GM12878 (cell line): ENCODE measurements at regions of chr1 and their contacts with region 1.

Region 1: GRCh38 chr1:165914136-165914798 is 86.9 kb downstream of the UCK2 start:
- DNase-seq: peak; percentile 54
- ATAC-seq: peak; percentile 95
- H3K4me3 ChIP-seq: no peak overlapping the region
- H3K27ac ChIP-seq: no peak overlapping the region
- H3K4me1 ChIP-seq: no peaks in the 10 kb centered on the region
- H3K27me3 ChIP-seq: no peaks in the 10 kb centered on the region
- CTCF ChIP-seq: peak; percentile 78 to 97 (median 87); a peak in 5 of 6 replicates
- EP300 ChIP-seq: no peak
- POLR2A ChIP-seq: no peak
- RAD21 ChIP-seq: peak; percentile 99

Region 2: GRCh38 chr1:165376041-165376810 is 538.0 kb before region 1 on chr1:
- CTCF ChIA-PET with region 1: no interaction called
- POLR2A ChIA-PET with region 1: no interaction called
- RAD21 ChIA-PET with region 1: no interaction called
- SMC1A ChIA-PET with region 1: no interaction called
- in situ Hi-C with region 1: no loop called
- intact Hi-C with region 1: loop called (anchors 5 kb)
- DNase-seq: no peak
- ATAC-seq: peak; percentile 67
- H3K4me3 ChIP-seq: peak overlapping the region; percentile 6; the same call in 1 of the 2 replicates
- H3K27ac ChIP-seq: no peak overlapping the region
- H3K4me1 ChIP-seq: peaks cover 4% of the 10 kb centered on the region; the same call in 1 of the 2 replicates
- H3K27me3 ChIP-seq: peaks cover 2% of the 10 kb centered on the region in 2 experiments; a peak in 3 of 4 replicates
- CTCF ChIP-seq: no peak
- EP300 ChIP-seq: no peak
- POLR2A ChIP-seq: no peak
- RAD21 ChIP-seq: no peak

Region 3: DNA sequence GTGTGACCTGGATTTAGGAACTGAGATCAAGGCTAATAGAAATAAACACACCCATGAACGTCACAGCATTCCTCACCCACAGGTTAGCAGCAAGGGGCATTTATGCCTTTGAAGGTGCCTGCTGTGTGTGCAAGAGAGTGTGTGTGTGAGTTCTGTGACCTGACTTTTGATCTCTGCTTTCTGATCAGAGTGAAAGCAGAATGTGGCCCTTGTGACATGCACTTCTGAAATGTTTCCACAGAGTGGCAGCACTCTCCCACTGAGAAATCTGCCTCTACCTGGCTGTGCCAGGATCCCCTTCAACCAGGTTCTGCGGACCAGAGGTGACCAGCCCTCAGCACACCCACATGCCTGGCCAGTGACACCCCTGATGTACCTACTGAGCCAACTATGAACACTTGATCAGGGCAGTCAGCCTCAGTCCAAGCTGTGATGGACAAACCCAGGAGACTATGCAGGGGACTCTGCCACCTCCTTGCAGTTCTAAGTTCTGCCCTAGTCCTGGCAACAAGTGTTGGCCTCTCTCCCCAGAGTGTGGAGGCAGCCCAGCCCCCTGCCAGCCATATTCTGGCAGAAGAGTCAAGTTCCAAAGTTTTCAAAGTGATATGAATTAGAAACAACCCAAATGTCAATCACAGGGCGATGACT is 510.3 kb before region 1 on chr1:
- CTCF ChIA-PET with region 1: no interaction called
- POLR2A ChIA-PET with region 1: no interaction called
- RAD21 ChIA-PET with region 1: no interaction called
- SMC1A ChIA-PET with region 1: interaction called, 4 read pairs
- in situ Hi-C with region 1: no loop called
- intact Hi-C with region 1: loop called (anchors 5 kb)
- DNase-seq: no peak
- ATAC-seq: peak; percentile 90
- H3K4me3 ChIP-seq: no peak overlapping the region
- H3K27ac ChIP-seq: no peak overlapping the region
- H3K4me1 ChIP-seq: no peaks in the 10 kb centered on the region
- H3K27me3 ChIP-seq: peaks cover 0 to 3% of the 10 kb centered on the region in 2 experiments; a peak in 2 of 4 replicates
- CTCF ChIP-seq: peak; percentile 66 to 71 (median 69); a peak in 5 of 6 replicates
- EP300 ChIP-seq: no peak
- POLR2A ChIP-seq: no peak
- RAD21 ChIP-seq: peak; percentile 55

Region 4: GRCh38 chr1:165481820-165482532 is 432.3 kb before region 1 on chr1:
- CTCF ChIA-PET with region 1: no interaction called
- POLR2A ChIA-PET with region 1: no interaction called
- RAD21 ChIA-PET with region 1: no interaction called
- SMC1A ChIA-PET with region 1: no interaction called
- in situ Hi-C with region 1: no loop called
- intact Hi-C with region 1: no loop called
- DNase-seq: no peak
- ATAC-seq: no peak
- H3K4me3 ChIP-seq: no peak overlapping the region
- H3K27ac ChIP-seq: no peak overlapping the region
- H3K4me1 ChIP-seq: no peaks in the 10 kb centered on the region
- H3K27me3 ChIP-seq: no peaks in the 10 kb centered on the region
- CTCF ChIP-seq: no peak
- EP300 ChIP-seq: no peak
- POLR2A ChIP-seq: no peak
- RAD21 ChIP-seq: no peak

Region 5: GRCh38 chr1:165763442-165763841 is 150.8 kb before region 1 on chr1:
- CTCF ChIA-PET with region 1: no interaction called
- POLR2A ChIA-PET with region 1: no interaction called
- RAD21 ChIA-PET with region 1: interaction called, 3 read pairs
- SMC1A ChIA-PET with region 1: interaction called, 13 read pairs
- in situ Hi-C with region 1: no loop called
- intact Hi-C with region 1: loop called (anchors 2 kb)
- DNase-seq: no peak
- ATAC-seq: peak; percentile 55
- H3K4me3 ChIP-seq: no peak overlapping the region
- H3K27ac ChIP-seq: no peak overlapping the region
- H3K4me1 ChIP-seq: peaks cover 5% of the 10 kb centered on the region; the same call in 1 of the 2 replicates
- H3K27me3 ChIP-seq: no peaks in the 10 kb centered on the region
- CTCF ChIP-seq: no peak
- EP300 ChIP-seq: no peak
- POLR2A ChIP-seq: no peak
- RAD21 ChIP-seq: no peak

Region 6: GRCh38 chr1:165884690-165885304 is 29.5 kb before region 1 on chr1:
- CTCF ChIA-PET with region 1: interaction called, 11 read pairs
- POLR2A ChIA-PET with region 1: no interaction called
- RAD21 ChIA-PET with region 1: interaction called, 3 read pairs
- SMC1A ChIA-PET with region 1: interaction called, 23 read pairs
- in situ Hi-C with region 1: no loop called
- intact Hi-C with region 1: no loop called
- DNase-seq: no peak
- ATAC-seq: peak; percentile 70
- H3K4me3 ChIP-seq: no peak overlapping the region
- H3K27ac ChIP-seq: peak overlapping the region; percentile 64
- H3K4me1 ChIP-seq: peaks cover 53% of the 10 kb centered on the region
- H3K27me3 ChIP-seq: no peaks in the 10 kb centered on the region
- CTCF ChIP-seq: no peak
- EP300 ChIP-seq: no peak
- POLR2A ChIP-seq: no peak
- RAD21 ChIP-seq: no peak